GM10248 (cell line): ENCODE measurements at regions of chr17 and their contacts with region 1.

Region 1: GRCh38 chr17:50094753-50095619 is at the start of gene PDK2:
- DNase-seq: peak; percentile 98
- CTCF ChIP-seq: no peak

Region 2: DNA sequence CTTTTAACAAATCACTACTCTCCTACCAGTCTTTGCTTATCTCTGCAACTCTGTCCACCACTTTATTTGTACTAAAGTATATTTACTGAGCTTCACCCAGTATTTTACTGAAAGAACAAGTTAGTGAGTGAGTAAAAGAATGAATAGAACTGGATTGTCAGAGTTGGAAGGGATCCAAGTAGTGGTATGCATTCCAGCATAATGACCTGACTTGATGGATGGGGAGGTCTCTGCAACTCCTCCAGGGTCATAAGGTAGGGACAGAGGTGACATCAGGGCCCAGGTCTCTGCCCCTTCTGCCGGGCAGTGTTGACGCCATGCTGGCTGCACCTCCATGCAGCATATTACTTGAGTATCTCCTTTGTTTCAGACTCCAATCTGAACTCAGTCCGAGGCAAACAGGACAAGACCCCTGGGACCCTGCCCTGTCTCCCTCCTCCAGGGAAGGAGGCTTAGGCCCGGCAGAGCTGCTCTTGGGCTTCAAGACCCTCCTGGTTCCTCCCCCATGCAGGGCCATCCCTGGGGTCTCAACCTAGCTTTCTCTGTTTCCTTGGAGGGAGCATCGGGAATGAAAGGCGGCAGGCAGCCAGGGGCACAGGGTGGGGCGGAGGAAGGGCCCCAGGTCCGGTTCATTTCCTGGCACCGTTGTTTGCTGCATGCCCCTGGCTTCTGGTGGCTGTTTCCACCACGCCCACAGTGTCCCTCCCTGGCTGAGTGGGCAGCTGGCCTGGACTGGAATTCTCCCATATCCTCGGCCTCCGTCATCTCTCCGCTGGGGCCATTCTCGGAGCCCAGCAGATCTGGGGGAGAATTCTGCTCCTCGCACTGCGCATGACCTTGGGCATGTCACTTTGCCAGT is 51.5 kb before region 1 on chr17:
- CTCF ChIA-PET with region 1: interaction called, 16 read pairs
- POLR2A ChIA-PET with region 1: no interaction called
- DNase-seq: no peak
- CTCF ChIP-seq: no peak

Region 3: DNA sequence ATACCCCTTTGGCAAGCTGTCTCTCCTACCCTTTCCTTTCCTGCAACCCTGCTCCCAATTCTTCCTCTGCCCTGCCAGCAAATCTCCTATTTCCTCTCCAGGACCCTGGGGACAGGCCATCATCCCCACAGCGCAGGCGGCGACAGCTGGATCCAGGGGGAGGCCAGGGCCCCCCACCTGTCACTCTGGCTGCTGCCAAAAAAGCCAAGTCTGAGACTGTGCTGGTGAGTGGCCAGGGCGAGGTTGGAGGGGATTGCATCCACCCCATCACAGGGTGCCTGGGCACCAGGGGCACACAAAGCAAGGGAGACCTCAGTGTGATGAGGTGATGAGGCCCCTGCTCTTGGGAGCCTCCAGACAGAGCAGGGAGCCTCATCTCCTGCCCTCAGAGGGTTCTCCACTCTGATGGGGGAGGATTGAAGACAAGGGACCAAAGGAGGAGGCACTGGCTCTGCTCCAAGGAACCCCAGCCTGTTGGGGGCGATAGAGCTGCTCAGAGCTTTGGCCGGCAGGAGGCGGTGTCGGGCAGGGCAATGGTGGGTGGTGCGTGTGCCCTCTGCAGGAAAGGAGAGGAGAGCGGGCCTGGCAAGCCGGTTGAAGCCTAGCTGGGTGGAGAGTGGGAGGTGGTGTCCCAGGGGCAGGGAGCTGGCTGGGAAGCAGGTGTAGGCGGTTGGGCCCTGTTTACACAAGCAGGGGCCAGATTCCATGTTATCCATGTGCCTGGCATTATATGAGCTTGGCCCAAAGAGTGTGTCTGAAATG is 15.5 kb before region 1 on chr17:
- CTCF ChIA-PET with region 1: interaction called, 18 read pairs
- POLR2A ChIA-PET with region 1: no interaction called
- DNase-seq: no peak
- CTCF ChIP-seq: peak; percentile 43

Region 4: GRCh38 chr17:50129728-50130558 is 35.0 kb after region 1 on chr17 and contains the start of gene SAMD14:
- CTCF ChIA-PET with region 1: interaction called, 22 read pairs
- POLR2A ChIA-PET with region 1: no interaction called
- DNase-seq: peak; percentile 76
- CTCF ChIP-seq: no peak

Region 5: GRCh38 chr17:50161023-50161910 is 66.3 kb after region 1 on chr17:
- CTCF ChIA-PET with region 1: interaction called, 24 read pairs
- POLR2A ChIA-PET with region 1: no interaction called
- DNase-seq: peak; percentile 99
- CTCF ChIP-seq: peak; percentile 93

Region 6: DNA sequence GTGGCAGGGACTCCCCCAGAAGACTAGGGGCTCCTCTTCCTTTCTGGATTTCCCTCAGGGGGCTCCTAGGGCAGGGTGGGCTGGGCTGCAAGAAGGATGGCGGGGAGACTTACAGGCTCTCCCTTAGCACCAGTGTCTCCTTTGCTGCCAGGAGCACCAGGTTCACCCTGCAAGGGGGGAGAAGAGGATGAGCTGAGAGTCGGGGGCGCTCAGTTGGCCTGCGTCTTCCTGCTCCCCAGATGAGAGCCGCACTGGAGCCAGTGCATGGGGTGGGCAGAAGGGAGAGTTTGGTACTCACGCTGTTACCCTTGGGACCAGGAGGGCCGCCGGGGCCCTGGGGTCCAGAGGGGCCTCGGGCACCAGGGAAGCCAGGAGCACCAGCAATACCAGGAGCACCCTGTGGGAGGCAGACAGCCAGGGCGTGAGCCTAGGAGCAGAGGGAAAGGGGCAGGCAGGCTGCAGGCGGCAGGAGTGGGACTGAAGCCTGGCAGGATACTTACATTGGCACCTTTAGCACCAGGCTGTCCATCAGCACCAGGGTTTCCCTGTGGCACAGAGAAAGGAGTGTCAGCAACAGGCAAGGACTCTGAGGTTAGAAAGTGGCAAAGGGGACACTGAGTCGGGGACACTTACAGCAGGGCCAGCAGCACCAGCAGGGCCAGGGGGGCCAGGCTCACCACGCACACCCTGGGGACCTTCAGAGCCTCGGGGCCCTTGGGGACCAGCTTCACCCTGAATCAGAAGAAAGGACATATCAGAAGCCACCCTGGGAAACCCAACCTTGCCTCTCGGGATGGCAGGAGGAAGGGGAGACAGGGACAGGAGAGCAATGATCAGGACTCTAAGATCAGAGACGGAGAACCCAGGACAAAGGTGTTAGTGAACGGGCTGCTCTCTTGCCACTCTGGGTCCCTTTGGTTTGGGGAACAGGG is 100.2 kb after region 1 on chr17:
- CTCF ChIA-PET with region 1: interaction called, 20 read pairs
- POLR2A ChIA-PET with region 1: no interaction called
- DNase-seq: no peak
- CTCF ChIP-seq: no peak

Region 7: GRCh38 chr17:50297407-50297865 is 202.4 kb after region 1 on chr17:
- CTCF ChIA-PET with region 1: interaction called, 39 read pairs
- POLR2A ChIA-PET with region 1: no interaction called
- DNase-seq: peak; percentile 82
- CTCF ChIP-seq: peak; percentile 98